ENCODE measurements at regions of chr15 and their contacts with region 1.

Region 1: GRCh38 chr15:67433495-67434099 is 87.3 kb upstream of the C15orf61 start:
- DNase-seq: peak; percentile 60 to 71 (median 67)
- ATAC-seq: peak; percentile 91
- H3K4me3 ChIP-seq: no peak overlapping the region
- H3K27ac ChIP-seq: no peak overlapping the region
- H3K4me1 ChIP-seq: peaks cover 0 to 5% of the 10 kb centered on the region in 2 experiments; a peak in 2 of 5 replicates
- H3K27me3 ChIP-seq: no peaks in the 10 kb centered on the region
- CTCF ChIP-seq: peak; percentile 81 to 86 (median 82)
- EP300 ChIP-seq: no peak
- POLR2A ChIP-seq: no peak
- RAD21 ChIP-seq: peak; percentile 79 to 88

Region 2: GRCh38 chr15:66946578-66947164 is 486.9 kb before region 1 on chr15:
- CTCF ChIA-PET with region 1: interaction called, 3 read pairs
- POLR2A ChIA-PET with region 1: no interaction called
- in situ Hi-C with region 1: loop called (anchors 10 kb)
- intact Hi-C with region 1: loop called (anchors 1 kb)
- DNase-seq: peak; percentile 77 to 85 (median 81)
- ATAC-seq: peak; percentile 89
- H3K4me3 ChIP-seq: no peak overlapping the region
- H3K27ac ChIP-seq: no peak overlapping the region
- H3K4me1 ChIP-seq: peaks cover 0 to 9% of the 10 kb centered on the region in 2 experiments; a peak in 1 of 5 replicates
- H3K27me3 ChIP-seq: peaks cover 0 to 9% of the 10 kb centered on the region in 2 experiments; a peak in 1 of 5 replicates
- CTCF ChIP-seq: peak; percentile 89 to 95 (median 93)
- EP300 ChIP-seq: no peak
- POLR2A ChIP-seq: no peak
- RAD21 ChIP-seq: peak; percentile 94 to 98

Region 3: DNA sequence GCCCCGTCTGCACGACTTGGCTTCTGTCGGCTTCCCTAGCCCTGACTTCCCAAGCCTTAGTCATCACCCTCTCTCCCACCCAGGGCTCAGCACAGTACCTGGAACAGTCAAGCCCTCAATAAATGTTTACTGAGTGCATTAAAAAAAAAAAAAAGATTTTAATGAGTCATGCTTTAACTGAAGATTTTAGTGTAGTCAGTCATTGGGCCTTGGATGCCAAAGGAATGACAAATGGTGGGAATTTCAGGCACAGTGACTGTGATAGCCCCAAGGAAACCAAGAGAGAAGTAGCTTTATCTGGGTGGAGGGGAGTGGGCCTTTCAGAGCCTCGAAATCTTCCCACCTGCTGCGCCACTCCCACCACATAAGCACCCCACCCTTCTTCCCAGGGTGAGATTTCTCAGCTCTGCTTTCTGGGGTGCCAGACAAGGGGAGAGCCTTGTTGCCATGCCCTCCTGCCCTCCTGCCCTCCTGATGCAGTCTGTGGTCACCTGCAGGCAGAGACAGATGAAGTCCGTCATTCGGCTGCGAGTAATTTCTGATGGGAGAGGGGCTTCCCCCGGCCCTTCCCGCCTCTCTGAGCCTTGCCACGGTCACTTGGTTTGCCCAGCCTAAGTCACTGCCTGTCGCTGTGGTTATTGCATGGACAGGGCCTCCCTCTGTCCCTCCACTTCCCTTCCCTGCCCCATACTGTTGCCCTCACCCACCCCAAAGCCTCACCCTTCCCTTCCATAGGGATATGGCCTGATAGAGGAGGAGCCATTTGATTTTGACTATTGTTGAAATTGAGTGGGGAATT is 326.4 kb before region 1 on chr15:
- CTCF ChIA-PET with region 1: no interaction called
- POLR2A ChIA-PET with region 1: no interaction called
- in situ Hi-C with region 1: no loop called
- intact Hi-C with region 1: no loop called
- DNase-seq: peak; percentile 44 to 58 (median 56)
- ATAC-seq: peak; percentile 62
- H3K4me3 ChIP-seq: no peak overlapping the region
- H3K27ac ChIP-seq: peak overlapping the region; percentile 34; the same call in 1 of the 3 replicates
- H3K4me1 ChIP-seq: peaks cover 13 to 38% of the 10 kb centered on the region in 2 experiments
- H3K27me3 ChIP-seq: no peaks in the 10 kb centered on the region
- CTCF ChIP-seq: no peak
- EP300 ChIP-seq: peak; percentile 61
- POLR2A ChIP-seq: no peak
- RAD21 ChIP-seq: no peak

Region 4: DNA sequence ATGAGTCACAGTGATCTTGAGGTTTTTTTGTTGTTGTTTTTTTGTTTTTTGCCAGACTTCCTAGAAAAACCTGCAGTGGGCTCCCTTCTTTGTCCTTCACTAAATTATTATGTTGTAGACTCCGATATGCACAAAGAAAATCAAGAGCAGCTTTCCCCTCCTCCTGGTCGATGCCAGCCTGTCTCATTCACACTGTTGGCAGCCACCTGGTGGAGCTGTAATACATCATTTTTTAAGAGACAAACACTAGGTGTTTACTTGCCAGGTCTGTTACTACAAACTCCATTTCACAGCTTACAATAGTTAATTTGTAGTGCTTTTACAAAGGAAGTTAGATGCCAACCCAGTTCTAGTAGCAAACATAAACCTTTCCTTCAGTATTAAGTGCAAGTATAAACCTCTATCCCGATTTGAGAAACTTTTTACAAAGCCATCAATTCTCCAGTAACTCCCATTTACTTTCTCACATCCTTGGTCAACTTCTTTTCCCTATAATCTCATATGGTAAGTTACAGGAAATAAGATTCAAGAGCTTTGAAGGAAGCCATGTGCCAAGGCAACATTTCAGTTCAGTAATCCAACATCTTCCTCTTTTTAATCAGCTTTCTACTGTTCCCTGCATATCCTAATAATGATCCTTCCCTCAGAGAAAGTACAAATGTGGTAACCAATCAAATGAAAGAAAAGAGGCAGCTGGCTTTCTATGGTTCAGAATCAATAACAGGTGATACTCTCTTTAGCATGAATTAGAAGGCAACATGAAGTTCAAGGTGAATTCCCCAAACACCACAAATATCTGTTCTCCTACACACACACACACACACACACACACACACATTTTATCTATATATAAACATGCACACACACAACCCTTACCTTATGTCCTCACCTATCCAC is 193.1 kb before region 1 on chr15:
- CTCF ChIA-PET with region 1: interaction called, 4 read pairs
- POLR2A ChIA-PET with region 1: no interaction called
- in situ Hi-C with region 1: no loop called
- intact Hi-C with region 1: loop called (anchors 5 kb)
- DNase-seq: peak in 1 of 4 experiments; percentile 9
- ATAC-seq: peak; percentile 63; the same call in 2 of the 3 replicates
- H3K4me3 ChIP-seq: no peak overlapping the region
- H3K27ac ChIP-seq: no peak overlapping the region
- H3K4me1 ChIP-seq: no peaks in the 10 kb centered on the region
- H3K27me3 ChIP-seq: no peaks in the 10 kb centered on the region
- CTCF ChIP-seq: peak; percentile 36 to 50 (median 38); a peak in 3 of 6 replicates
- EP300 ChIP-seq: no peak
- POLR2A ChIP-seq: no peak
- RAD21 ChIP-seq: peak; percentile 34 to 44

Region 5: DNA sequence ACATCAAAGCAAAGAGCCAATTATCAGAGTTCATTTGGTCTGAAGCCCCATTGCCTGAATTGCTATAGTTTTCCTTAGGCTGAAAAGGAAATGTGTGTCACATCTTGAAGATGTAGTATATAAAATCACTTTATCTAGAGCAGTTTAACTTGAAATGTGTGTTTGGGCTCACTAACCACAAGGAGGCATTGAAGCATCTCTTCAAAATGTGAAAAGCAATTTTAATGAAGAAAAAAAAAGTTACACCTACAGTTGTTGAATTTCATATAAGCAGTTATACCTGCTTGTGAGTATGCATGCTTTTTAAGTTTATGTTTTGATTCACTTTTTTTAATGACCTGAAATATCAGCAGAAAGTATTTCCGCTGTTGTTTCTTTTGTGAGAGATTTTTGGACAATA is 49.7 kb before region 1 on chr15:
- CTCF ChIA-PET with region 1: interaction called, 12 read pairs
- POLR2A ChIA-PET with region 1: interaction called, 3 read pairs
- in situ Hi-C with region 1: no loop called
- intact Hi-C with region 1: loop called (anchors 1 kb)
- DNase-seq: no peak
- ATAC-seq: no peak
- H3K4me3 ChIP-seq: no peak overlapping the region
- H3K27ac ChIP-seq: no peak overlapping the region
- H3K4me1 ChIP-seq: no peaks in the 10 kb centered on the region; a peak in 1 of 5 replicates
- H3K27me3 ChIP-seq: no peaks in the 10 kb centered on the region
- CTCF ChIP-seq: peak; percentile 35 to 68 (median 36); a peak in 3 of 6 replicates
- EP300 ChIP-seq: no peak
- POLR2A ChIP-seq: no peak
- RAD21 ChIP-seq: peak; percentile 37 to 71; a peak in 3 of 4 replicates

Region 6: DNA sequence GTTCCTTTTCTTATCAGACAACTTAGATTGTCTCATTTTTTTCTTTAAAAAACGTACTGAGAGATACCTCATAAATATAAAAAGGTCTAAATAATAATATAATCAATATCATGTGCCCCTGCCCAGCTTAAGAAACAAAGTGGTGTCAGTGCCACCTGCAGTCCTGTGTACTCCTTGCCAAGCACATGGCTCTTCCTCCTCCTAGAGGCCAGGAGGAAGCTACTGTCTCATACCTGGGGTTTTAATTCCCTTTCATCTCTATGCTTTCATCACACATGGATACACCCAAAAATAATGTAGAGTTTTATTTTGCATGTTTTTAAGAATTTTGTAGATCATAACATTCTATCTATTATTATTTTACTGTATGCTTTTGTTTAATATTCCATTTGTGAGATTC is 11.3 kb before region 1 on chr15:
- CTCF ChIA-PET with region 1: no interaction called
- POLR2A ChIA-PET with region 1: no interaction called
- in situ Hi-C with region 1: no loop called
- intact Hi-C with region 1: no loop called
- DNase-seq: no peak
- ATAC-seq: no peak
- H3K4me3 ChIP-seq: no peak overlapping the region
- H3K27ac ChIP-seq: no peak overlapping the region
- H3K4me1 ChIP-seq: no peaks in the 10 kb centered on the region
- H3K27me3 ChIP-seq: no peaks in the 10 kb centered on the region
- CTCF ChIP-seq: peak in 2 of 3 experiments; percentile 31 to 53; a peak in 3 of 6 replicates
- EP300 ChIP-seq: no peak
- POLR2A ChIP-seq: no peak
- RAD21 ChIP-seq: peak in 1 of 2 experiments; percentile 38; a peak in 1 of 4 replicates

Region 7: DNA sequence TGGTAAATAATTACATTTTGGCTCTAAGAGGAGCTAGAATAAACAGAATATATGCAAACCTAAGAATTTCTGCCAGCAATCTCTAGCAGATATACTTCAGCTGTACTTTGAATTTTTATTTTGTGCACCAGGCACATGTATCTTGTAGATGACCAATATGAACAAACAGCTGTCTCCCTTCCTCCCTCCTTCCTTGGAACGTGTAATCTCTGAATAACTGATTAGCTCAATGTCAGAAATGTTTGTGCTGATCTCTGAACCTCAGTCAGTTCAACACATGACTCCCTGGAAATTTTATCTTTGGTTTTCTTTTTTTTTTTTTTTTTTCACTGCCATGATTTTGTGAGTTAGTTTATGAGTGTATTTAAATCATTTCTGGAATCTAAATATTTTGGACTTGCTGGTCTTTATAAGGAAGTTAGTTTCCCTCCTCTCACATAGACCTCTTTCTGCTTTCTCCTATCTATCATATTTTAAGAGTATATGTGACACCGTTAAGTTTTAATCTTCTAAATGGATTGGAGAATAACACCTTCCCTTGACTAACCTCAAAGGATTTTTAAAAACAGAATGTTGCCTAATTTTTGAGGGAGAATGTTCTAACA is 178.3 kb after region 1 on chr15:
- CTCF ChIA-PET with region 1: no interaction called
- POLR2A ChIA-PET with region 1: no interaction called
- in situ Hi-C with region 1: no loop called
- intact Hi-C with region 1: no loop called
- DNase-seq: no peak
- ATAC-seq: no peak
- H3K4me3 ChIP-seq: no peak overlapping the region
- H3K27ac ChIP-seq: no peak overlapping the region
- H3K4me1 ChIP-seq: no peaks in the 10 kb centered on the region; a peak in 1 of 5 replicates
- H3K27me3 ChIP-seq: no peaks in the 10 kb centered on the region
- CTCF ChIP-seq: no peak
- EP300 ChIP-seq: no peak
- POLR2A ChIP-seq: no peak
- RAD21 ChIP-seq: no peak

Measured in K562 (cell line).